OCI-LY7 (cell line): ENCODE measurements at regions of chr5 and their contacts with region 1.

Region 1: DNA sequence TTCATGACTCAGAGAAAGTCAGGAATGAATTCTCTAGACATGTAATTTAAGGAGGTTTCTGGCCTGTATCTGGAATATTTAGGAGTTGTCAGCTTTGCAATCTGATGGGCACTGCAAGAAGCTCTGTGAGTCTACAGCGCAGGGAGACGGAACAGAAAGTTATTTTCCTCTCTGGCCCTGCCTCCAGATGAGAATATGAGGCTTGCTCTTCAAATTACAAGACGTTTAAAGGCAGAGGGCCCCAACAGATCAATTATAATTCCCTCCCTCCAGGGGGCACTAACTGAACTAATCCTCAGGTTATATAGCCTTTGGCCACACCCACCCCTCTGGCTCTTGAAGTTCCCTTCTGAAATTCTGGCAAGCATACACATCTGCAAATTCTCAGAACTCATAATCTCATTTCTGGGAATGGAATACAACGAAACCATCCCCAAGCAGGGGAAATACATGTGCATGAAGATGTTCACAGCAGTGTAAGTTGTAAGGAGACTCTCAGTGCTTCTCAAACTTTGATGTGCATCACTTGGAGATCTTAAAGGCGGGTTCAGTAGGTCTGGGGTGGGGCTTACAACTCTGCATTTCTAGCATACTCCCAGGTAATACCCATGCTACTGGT is 307.6 kb downstream of the CWC27 start:
- DNase-seq: peak; percentile 94
- H3K4me3 ChIP-seq: peak overlapping the region; percentile 10
- H3K27ac ChIP-seq: peak overlapping the region; percentile 64
- H3K4me1 ChIP-seq: peaks cover 71% of the 10 kb centered on the region
- CTCF ChIP-seq: peak; percentile 84

Region 2: DNA sequence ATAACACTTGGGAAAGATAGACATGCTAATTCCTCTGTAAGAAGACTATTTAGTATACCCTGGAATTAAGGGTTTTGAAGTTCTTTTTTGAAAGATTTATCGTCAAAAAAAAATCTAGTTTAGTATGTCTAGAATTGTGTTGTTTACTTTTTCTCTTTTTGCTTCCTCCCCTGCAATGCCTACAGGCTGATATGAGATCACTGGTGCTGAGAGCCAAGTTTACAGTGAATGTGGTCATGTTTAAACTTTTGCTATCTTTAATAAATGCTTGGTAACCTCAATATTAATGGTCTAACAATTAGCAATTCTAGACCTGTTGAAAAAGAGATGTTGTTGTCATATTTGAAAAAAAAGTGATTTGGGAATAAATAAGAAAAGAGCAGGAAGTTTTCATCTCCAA is 221.5 kb before region 1 on chr5:
- CTCF ChIA-PET with region 1: no interaction called
- POLR2A ChIA-PET with region 1: no interaction called
- intact Hi-C with region 1: no loop called
- DNase-seq: no peak
- H3K4me3 ChIP-seq: no peak overlapping the region
- H3K27ac ChIP-seq: no peak overlapping the region
- H3K4me1 ChIP-seq: no peaks in the 10 kb centered on the region
- CTCF ChIP-seq: no peak

Region 3: GRCh38 chr5:65035211-65036206 is 40.9 kb before region 1 on chr5:
- CTCF ChIA-PET with region 1: interaction called, 4 read pairs
- POLR2A ChIA-PET with region 1: interaction called, 57 read pairs
- intact Hi-C with region 1: loop called (anchors 1 kb)
- DNase-seq: peak; percentile 76
- H3K4me3 ChIP-seq: peak overlapping the region; percentile 66
- H3K27ac ChIP-seq: peak overlapping the region; percentile 80
- H3K4me1 ChIP-seq: peaks cover 63% of the 10 kb centered on the region
- CTCF ChIP-seq: peak; percentile 29; the same call in 1 of the 2 replicates

Region 4: DNA sequence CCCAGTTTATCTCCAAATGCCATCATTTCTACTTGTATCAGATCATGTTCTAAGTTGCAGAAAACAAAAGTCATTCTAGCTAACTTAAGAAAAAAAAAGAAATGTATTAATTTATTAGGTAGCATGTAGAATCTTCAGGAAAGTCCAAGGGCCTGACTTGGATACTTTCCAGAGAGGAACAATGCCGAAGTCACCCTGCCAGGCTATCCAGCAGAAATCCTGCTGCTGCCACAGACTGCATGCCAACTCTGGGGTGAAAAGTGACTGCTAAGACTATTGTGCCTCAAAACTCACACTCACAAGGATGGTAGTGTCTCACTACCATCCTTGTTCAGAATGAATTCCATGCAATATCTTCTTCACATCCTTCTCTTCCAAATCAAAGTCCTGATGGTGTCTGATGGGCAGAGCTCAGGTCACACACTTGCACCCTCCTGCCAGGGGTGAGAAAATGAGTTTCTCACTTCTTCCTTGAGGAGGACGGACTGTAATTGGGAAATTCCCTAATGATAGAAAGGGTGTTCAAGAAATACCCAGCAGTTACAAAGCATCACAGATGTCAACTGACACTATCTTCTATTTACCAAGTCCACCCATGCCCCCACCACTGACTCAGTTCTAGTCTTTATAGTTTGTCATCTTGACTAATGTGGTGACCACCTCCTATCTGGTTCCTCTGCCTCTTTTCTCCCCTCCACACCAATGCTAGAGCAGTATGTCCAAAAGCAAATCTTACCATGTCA is 28.2 kb before region 1 on chr5:
- CTCF ChIA-PET with region 1: no interaction called
- POLR2A ChIA-PET with region 1: interaction called, 30 read pairs
- intact Hi-C with region 1: no loop called
- DNase-seq: no peak
- H3K4me3 ChIP-seq: peak overlapping the region; percentile 31
- H3K27ac ChIP-seq: peak overlapping the region; percentile 49
- H3K4me1 ChIP-seq: peaks cover 72% of the 10 kb centered on the region
- CTCF ChIP-seq: no peak

Region 5: GRCh38 chr5:66144074-66144833 is 1067.9 kb after region 1 on chr5 and contains the start of gene SREK1:
- CTCF ChIA-PET with region 1: no interaction called
- POLR2A ChIA-PET with region 1: no interaction called
- intact Hi-C with region 1: loop called (anchors 10 kb)
- DNase-seq: peak; percentile 93
- H3K4me3 ChIP-seq: peak within 1 kb of the TSS; percentile 76
- H3K27ac ChIP-seq: peak within 1 kb of the TSS; percentile 82
- H3K4me1 ChIP-seq: peaks cover 21% of the 10 kb centered on the region
- CTCF ChIP-seq: no peak
- total RNA-seq, gene SREK1: 101 and 225 TPM in 2 replicates